Common myeloid progenitor, CD34-positive (primary cell): ENCODE measurements at regions of chr7 and their contacts with region 1.

Region 1: GRCh38 chr7:30548762-30549344 is 44.2 kb upstream of the GGCT start:
- DNase-seq: peak; percentile 36 to 55 (median 51)
- H3K4me3 ChIP-seq: no peak overlapping the region
- H3K27ac ChIP-seq: no peak overlapping the region
- H3K4me1 ChIP-seq: peaks cover 0 to 11% (median 8%) of the 10 kb centered on the region in 4 experiments
- H3K27me3 ChIP-seq: no peaks in the 10 kb centered on the region

Region 2: DNA sequence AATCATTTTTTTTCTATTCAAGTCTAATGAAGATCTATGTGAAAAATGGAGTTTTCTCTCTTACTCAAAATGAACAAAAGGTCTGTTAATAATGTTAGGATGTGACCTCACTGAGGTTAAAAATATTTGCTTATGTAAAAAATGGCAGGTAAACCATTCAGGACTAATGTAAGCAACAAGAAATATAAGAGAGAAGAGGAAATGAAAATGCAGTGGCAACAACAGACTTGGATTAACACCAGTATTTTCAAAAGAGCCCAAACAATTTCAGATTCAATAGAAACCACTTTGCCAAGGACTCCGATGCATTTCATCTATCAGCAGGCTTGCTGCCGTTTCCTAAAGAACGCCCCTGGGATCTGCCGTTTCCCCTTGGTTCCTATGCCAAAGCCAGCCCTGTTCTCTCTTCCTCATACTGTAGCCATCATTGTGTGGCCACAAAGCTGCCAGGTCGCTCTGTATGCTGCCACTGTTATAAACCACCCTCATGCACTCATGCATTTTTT is 347.6 kb before region 1 on chr7:
- CTCF ChIA-PET with region 1: no interaction called
- POLR2A ChIA-PET with region 1: no interaction called
- DNase-seq: no peak
- H3K4me3 ChIP-seq: no peak overlapping the region
- H3K27ac ChIP-seq: no peak overlapping the region
- H3K4me1 ChIP-seq: no peaks in the 10 kb centered on the region
- H3K27me3 ChIP-seq: no peaks in the 10 kb centered on the region

Region 3: GRCh38 chr7:30459591-30460257 is 89.1 kb before region 1 on chr7:
- CTCF ChIA-PET with region 1: no interaction called
- POLR2A ChIA-PET with region 1: no interaction called
- DNase-seq: no peak
- H3K4me3 ChIP-seq: no peak overlapping the region
- H3K27ac ChIP-seq: no peak overlapping the region
- H3K4me1 ChIP-seq: peaks cover 2 to 14% (median 6%) of the 10 kb centered on the region in 4 experiments
- H3K27me3 ChIP-seq: no peaks in the 10 kb centered on the region

Region 4: GRCh38 chr7:30533886-30534285 is 15.0 kb before region 1 on chr7:
- CTCF ChIA-PET with region 1: interaction called, 13 read pairs
- POLR2A ChIA-PET with region 1: interaction called, 3 read pairs
- DNase-seq: no peak
- H3K4me3 ChIP-seq: no peak overlapping the region
- H3K27ac ChIP-seq: no peak overlapping the region
- H3K4me1 ChIP-seq: no peaks in the 10 kb centered on the region
- H3K27me3 ChIP-seq: no peaks in the 10 kb centered on the region